ENCODE measurements at regions of chr16 and their contacts with region 1.

Region 1: DNA sequence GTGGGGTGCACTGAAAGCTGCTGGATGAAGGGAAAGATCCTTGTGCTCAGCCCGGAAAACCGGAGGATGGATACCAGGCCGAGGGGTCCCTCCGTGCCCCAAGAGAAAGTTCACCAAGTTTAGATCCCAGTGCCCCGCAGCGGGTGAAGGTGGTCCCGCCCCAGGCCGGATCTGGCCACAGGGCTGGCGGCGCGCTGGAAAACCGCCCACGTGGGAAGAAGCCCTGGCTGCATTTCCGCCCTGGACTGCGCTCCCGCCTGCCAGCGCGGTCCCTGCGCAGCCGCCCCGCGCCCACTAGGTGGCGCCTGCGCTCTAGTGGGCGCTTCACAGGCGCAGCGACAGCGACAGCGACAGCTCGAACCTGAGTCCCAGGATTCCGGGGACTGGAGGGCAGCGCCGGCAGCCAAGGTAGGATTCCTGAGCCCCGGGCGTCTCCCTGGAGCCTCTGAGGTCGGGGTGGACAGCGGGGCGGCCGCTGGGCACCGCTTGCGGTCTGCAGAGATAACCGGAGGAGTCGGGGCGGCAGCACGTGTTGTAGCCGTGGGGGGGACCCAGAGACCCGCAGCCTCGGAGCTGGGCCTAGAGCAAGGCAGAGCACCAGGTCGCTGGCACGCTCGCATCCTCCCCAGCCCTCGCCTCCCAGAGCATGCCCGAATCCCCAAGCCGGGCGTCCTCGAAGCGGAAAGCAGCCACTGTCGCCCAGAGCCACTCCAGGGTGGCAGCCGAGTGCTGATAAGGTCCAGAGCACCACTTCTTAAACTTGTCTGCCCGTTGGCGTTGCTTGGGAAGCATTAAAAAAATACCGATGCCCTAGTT is at the start of gene CHD9:
- DNase-seq: peak; percentile 66 to 81 (median 79)
- H3K4me3 ChIP-seq: peak within 1 kb of the TSS; percentile 94
- H3K4me3 Mint-ChIP-seq: peak within 1 kb of the TSS; percentile 82 to 96 (median 90)
- H3K27ac ChIP-seq: peak within 1 kb of the TSS; percentile 76
- H3K27ac Mint-ChIP-seq: peak within 1 kb of the TSS; percentile 44 to 95 (median 90)
- H3K4me1 ChIP-seq: peaks cover 19% of the 10 kb centered on the region
- H3K4me1 Mint-ChIP-seq: peaks cover 34 to 45% (median 39%) of the 10 kb centered on the region in 3 donors
- H3K27me3 ChIP-seq: no peaks in the 10 kb centered on the region
- H3K27me3 Mint-ChIP-seq: no peaks in the 10 kb centered on the region
- total RNA-seq, gene CHD9: 17.4 to 21.8 TPM

Region 2: GRCh38 chr16:52964290-52964689 is 90.6 kb before region 1 on chr16:
- CTCF ChIA-PET with region 1: no interaction called
- POLR2A ChIA-PET with region 1: no interaction called
- DNase-seq: no peak
- H3K4me3 ChIP-seq: no peak overlapping the region
- H3K4me3 Mint-ChIP-seq: no peak overlapping the region
- H3K27ac ChIP-seq: no peak overlapping the region
- H3K27ac Mint-ChIP-seq: no peak overlapping the region
- H3K4me1 ChIP-seq: no peaks in the 10 kb centered on the region
- H3K4me1 Mint-ChIP-seq: no peaks in the 10 kb centered on the region
- H3K27me3 ChIP-seq: no peaks in the 10 kb centered on the region
- H3K27me3 Mint-ChIP-seq: peaks cover 0 to 5% of the 10 kb centered on the region in 2 donors

Region 3: DNA sequence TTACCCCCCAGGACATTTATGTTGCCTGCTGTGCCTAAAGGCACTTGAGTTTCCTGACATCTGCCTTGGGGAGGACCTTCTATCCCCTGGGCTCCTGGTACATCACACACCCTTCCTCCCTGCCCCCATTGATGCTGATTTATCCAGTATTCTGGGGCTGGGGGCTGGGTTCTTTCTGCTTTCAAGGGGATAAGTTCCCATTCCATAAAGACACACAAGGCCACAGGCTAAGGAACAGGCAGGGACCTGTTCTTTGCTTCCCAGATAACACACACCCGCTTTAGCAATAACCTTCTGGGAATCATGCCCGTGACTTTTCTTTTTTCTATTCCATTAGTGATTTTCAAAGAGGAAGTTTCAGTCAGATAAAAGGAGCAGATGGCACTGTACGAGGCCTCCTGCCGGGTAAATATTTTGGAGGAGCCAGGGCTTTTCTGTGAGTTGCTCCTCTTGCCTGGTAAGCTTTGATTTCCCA is 30.5 kb after region 1 on chr16:
- CTCF ChIA-PET with region 1: interaction called, 13 read pairs
- POLR2A ChIA-PET with region 1: no interaction called
- DNase-seq: no peak
- H3K4me3 ChIP-seq: no peak overlapping the region
- H3K4me3 Mint-ChIP-seq: no peak overlapping the region
- H3K27ac ChIP-seq: no peak overlapping the region
- H3K27ac Mint-ChIP-seq: peak overlapping the region in 3 of 8 donors; percentile 3 to 51 (median 14)
- H3K4me1 ChIP-seq: peaks cover 10% of the 10 kb centered on the region
- H3K4me1 Mint-ChIP-seq: peaks cover 25 to 27% (median 26%) of the 10 kb centered on the region in 3 donors
- H3K27me3 ChIP-seq: no peaks in the 10 kb centered on the region
- H3K27me3 Mint-ChIP-seq: no peaks in the 10 kb centered on the region

Region 4: DNA sequence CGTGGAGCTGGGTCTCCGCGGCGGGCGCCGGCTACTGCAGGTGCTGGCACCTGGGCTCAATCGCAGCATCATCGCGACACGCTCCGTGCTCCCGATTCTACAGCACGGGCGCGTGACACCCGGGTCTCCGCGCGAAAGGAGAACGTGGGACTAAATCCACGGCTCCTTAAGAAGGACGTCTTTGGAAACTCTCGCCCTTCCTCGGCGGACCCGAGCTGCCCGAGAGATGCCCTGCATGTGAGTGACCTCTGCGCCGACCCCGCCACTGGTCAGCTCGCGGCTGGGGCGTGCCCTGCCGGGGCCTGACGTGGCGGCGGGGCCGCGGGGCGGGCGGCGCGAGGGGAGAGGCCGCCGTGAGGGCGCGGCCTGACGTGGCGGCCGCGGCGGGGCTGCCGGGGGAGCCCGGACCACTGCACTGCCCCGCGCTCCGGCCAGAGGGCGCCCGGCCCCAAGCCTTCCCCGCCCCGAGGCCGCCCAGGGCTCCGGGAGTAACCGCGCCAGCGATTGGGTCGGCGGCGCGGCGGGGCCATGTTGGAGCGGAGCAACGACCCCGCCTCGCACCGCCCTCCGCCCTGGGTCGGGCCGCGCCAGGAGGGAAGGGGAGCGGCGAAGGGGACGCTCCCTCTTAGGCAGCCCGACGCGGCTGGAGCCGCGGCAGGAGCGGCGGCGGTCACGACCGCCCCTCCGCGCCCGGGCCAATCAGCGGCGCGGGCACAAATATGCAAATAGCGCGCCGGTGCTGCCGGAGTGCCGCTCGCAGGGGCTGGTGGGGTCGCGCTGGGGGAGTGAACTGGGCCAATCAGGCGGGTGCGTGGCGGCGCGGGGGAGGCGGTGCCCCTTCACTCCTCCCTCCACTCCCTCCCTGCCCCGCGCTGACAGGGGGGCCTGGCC is 75.5 kb after region 1 on chr16:
- CTCF ChIA-PET with region 1: interaction called, 26 read pairs
- POLR2A ChIA-PET with region 1: no interaction called
- DNase-seq: peak; percentile 94 to 97 (median 97)
- H3K4me3 ChIP-seq: peak overlapping the region; percentile 60
- H3K4me3 Mint-ChIP-seq: peak overlapping the region; percentile 83 to 93 (median 86)
- H3K27ac ChIP-seq: peak overlapping the region; percentile 58
- H3K27ac Mint-ChIP-seq: peak overlapping the region; percentile 76 to 98 (median 91)
- H3K4me1 ChIP-seq: peaks cover 10% of the 10 kb centered on the region
- H3K4me1 Mint-ChIP-seq: peaks cover 26 to 31% (median 28%) of the 10 kb centered on the region in 3 donors
- H3K27me3 ChIP-seq: no peaks in the 10 kb centered on the region
- H3K27me3 Mint-ChIP-seq: no peaks in the 10 kb centered on the region

Region 5: DNA sequence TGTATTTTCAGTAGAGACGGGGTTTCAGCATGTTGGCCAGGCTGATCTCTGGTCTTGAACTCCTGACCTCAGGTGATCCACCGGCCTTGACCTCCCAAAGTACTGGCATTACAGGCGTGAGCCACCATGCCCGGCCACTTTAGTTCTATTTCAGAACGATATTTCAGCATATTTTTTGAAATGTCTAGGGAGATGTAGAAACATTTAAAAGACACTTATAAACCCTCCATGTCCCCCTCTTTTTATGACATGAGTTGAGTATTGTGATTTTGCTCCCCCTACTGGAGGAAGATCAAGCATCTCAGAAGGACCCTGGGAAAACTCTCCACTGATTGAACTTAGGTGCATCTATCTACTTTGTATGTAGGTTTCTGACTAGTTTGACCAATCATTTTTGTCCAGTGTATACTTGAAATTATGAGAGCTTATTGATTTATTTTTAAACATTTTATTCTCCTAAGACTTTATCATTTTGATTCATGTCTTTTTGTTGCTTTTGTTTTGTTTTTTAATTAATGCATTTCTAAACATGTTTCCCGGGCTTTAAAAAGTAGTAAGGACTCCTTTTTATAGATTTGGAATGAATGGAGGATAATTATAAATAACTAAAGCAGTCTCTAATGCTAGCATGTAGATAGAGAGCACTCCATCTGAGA is 105.0 kb after region 1 on chr16:
- CTCF ChIA-PET with region 1: interaction called, 113 read pairs
- POLR2A ChIA-PET with region 1: no interaction called
- DNase-seq: peak in 3 of 5 donors; percentile 43 to 53 (median 47)
- H3K4me3 ChIP-seq: no peak overlapping the region
- H3K4me3 Mint-ChIP-seq: no peak overlapping the region
- H3K27ac ChIP-seq: no peak overlapping the region
- H3K27ac Mint-ChIP-seq: peak overlapping the region in 1 of 8 donors; percentile 51
- H3K4me1 ChIP-seq: no peaks in the 10 kb centered on the region
- H3K4me1 Mint-ChIP-seq: peaks cover 0 to 12% (median 7%) of the 10 kb centered on the region in 3 donors
- H3K27me3 ChIP-seq: no peaks in the 10 kb centered on the region
- H3K27me3 Mint-ChIP-seq: no peaks in the 10 kb centered on the region

Region 6: GRCh38 chr16:53509906-53510703 is 455.2 kb after region 1 on chr16:
- CTCF ChIA-PET with region 1: interaction called, 10 read pairs
- POLR2A ChIA-PET with region 1: no interaction called
- DNase-seq: peak; percentile 34 to 70 (median 52)
- H3K4me3 ChIP-seq: peak overlapping the region; percentile 20
- H3K4me3 Mint-ChIP-seq: peak overlapping the region; percentile 29 to 72 (median 61)
- H3K27ac ChIP-seq: no peak overlapping the region
- H3K27ac Mint-ChIP-seq: peak overlapping the region in 6 of 8 donors; percentile 33 to 80 (median 69)
- H3K4me1 ChIP-seq: peaks cover 14% of the 10 kb centered on the region
- H3K4me1 Mint-ChIP-seq: peaks cover 44 to 59% (median 52%) of the 10 kb centered on the region in 3 donors
- H3K27me3 ChIP-seq: no peaks in the 10 kb centered on the region
- H3K27me3 Mint-ChIP-seq: peaks cover 0 to 2% of the 10 kb centered on the region in 2 donors